Activated CD4-positive, alpha-beta T cell treated with anti-CD3 and anti-CD28 coated beads, Interleukin-2, amount 10 ng/mL, durations not matched to agents 24 days and 14 days (primary cell): ENCODE measurements at regions of chr6 and their contacts with region 1.

Region 1: DNA sequence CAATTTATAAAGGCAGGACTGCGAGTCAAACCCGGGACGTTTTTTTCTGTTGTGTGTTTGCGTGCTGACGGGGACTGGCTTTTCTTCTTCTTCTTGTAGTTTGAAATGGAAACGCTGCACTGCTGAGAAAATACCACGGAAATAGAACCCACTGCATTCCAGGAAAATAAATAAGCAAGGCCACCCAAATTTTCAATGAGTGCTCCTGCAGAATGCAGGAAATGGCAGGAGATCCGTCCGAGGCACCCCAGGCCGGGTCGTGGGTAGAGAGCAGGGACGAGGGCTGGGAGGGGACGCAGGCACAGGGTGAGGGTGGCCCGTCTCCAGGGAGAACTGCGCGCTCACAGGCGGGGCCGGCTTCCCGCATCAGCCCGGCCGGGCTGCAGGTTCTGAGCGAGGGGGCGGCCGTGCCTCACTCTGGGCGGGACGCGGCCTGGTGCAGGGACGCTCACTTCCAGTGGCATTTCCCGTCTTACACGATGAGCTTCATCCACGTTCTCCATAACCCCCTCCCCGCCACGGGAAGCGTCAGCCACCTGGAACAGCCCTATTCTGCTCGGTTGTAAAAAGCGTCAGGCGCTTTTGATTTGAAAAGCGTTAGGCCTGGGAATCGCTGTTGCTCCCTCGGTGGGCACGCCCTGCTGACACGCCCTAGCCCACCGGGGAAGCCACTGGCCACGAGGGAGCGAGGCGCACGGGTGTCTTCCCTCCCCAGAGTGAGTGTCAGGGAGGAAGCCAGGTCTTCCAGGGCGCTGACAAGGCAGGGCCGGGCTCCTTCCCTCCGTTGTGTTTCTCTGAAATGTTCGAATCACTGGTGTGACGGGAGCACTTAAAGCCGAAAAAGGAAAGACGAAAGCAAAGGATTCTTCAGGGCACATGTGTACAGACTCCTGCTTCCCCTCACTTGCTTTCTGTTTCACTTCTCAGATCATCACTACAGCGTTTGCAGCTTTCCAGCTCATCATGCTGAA is 17.9 kb upstream of the EXOC2 start:
- DNase-seq: peak; percentile 91
- H3K4me3 Mint-ChIP-seq: peak overlapping the region; percentile 98
- H3K27ac Mint-ChIP-seq: peak overlapping the region; percentile 100
- H3K4me1 Mint-ChIP-seq: peaks cover 43% of the 10 kb centered on the region
- H3K27me3 Mint-ChIP-seq: no peaks in the 10 kb centered on the region

Region 2: GRCh38 chr6:506508-506907 is 204.4 kb before region 1 on chr6:
- intact Hi-C with region 1: loop called (anchors 2 kb)
- DNase-seq: peak; percentile 77
- H3K4me3 Mint-ChIP-seq: peak overlapping the region; percentile 75
- H3K27ac Mint-ChIP-seq: peak overlapping the region; percentile 98
- H3K4me1 Mint-ChIP-seq: peaks cover 90% of the 10 kb centered on the region
- H3K27me3 Mint-ChIP-seq: no peaks in the 10 kb centered on the region

Region 3: DNA sequence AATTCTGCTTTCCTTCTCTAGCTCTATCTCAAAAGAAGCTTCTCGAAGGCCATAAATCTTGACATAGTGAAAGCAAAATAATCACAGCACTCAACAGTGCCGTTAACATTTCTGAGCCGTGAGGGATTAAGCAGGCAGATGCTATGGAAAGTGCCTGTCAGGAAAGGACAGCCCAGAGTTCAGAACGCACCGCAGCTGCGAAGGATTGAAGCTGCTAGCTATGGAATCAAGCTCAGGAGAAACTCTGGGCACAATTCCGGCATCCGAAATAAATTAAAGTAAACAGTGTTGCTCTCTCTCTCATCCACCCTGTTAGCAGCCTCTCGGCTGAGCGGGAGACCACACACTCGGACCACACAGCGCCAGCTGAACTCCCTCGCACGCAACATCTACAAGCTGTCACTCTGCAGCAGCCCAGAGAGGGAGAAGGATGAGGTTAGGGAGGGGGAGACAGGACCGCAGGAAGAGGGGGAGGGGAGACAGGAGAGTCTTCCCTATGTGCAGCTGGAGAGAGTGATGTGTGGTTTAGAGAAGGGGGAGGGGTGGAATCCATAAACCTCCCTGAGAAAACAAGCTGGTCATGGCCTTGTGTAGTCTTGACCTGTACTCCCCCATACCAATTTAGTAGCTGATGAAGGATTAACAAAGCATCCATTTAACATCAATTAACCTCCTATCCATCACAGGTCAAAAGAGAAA is 27.0 kb before region 1 on chr6:
- intact Hi-C with region 1: loop called (anchors 2 kb)
- DNase-seq: peak; percentile 66
- H3K4me3 Mint-ChIP-seq: peak overlapping the region; percentile 71
- H3K27ac Mint-ChIP-seq: peak overlapping the region; percentile 77
- H3K4me1 Mint-ChIP-seq: peaks cover 41% of the 10 kb centered on the region
- H3K27me3 Mint-ChIP-seq: no peaks in the 10 kb centered on the region

Region 4: DNA sequence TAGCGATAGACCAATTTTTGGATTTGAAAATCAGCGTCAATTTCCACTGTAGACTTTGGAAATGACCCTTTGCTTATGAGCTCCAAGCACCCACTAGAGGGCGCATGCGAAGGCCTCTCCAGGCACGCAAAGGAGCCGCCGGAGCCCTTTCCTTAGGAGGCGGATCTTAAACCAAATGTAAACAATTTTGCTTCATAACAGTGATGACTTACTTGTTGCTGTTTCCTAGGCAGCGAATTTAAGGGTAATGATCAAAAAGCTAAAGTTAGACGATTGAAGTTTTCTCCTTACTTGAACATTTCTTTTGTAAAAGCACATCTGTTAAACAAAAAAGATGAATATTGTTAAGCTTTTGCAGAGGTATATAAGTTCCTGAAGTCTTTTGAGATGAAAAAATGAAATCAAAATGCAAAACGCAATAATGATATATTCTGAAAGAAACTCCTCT is 11.2 kb after region 1 on chr6:
- intact Hi-C with region 1: loop called (anchors 1 kb)
- DNase-seq: peak; percentile 93
- H3K4me3 Mint-ChIP-seq: no peak overlapping the region
- H3K27ac Mint-ChIP-seq: no peak overlapping the region
- H3K4me1 Mint-ChIP-seq: peaks cover 8% of the 10 kb centered on the region
- H3K27me3 Mint-ChIP-seq: peaks cover 16% of the 10 kb centered on the region